Right ventricle myocardium inferior (tissue), 1 donor: ENCODE measurements at regions of chr10 and their contacts with region 1.

Region 1: GRCh38 chr10:95374597-95375209 is 83.9 kb upstream of the PDLIM1 start:
- DNase-seq: peak; percentile 76
- ATAC-seq: peak; percentile 84

Region 2: GRCh38 chr10:95391581-95392216 is 17.0 kb after region 1 on chr10:
- intact Hi-C with region 1: loop called (anchors 2 kb)
- DNase-seq: no peak
- ATAC-seq: no peak

Region 3: GRCh38 chr10:95414844-95415485 is 40.3 kb after region 1 on chr10:
- intact Hi-C with region 1: loop called (anchors 5 kb)
- DNase-seq: no peak
- ATAC-seq: peak; percentile 78

Region 4: GRCh38 chr10:95430231-95430951 is 55.7 kb after region 1 on chr10:
- intact Hi-C with region 1: loop called (anchors 2 kb)
- DNase-seq: no peak
- ATAC-seq: peak; percentile 68

Region 5: GRCh38 chr10:95601116-95601719 is 226.5 kb after region 1 on chr10:
- intact Hi-C with region 1: loop called (anchors 1 kb)
- DNase-seq: no peak
- ATAC-seq: peak; percentile 93